ENCODE measurements at regions of chr5 and their contacts with region 1.

Region 1: GRCh38 chr5:61919920-61920319 is 386.1 kb upstream of the KIF2A start:
- DNase-seq: peak; percentile 64
- H3K4me3 Mint-ChIP-seq: no peak overlapping the region
- H3K27ac Mint-ChIP-seq: no peak overlapping the region
- H3K4me1 Mint-ChIP-seq: peaks cover 22% of the 10 kb centered on the region
- H3K27me3 Mint-ChIP-seq: no peaks in the 10 kb centered on the region
- CTCF ChIP-seq: no peak

Region 2: DNA sequence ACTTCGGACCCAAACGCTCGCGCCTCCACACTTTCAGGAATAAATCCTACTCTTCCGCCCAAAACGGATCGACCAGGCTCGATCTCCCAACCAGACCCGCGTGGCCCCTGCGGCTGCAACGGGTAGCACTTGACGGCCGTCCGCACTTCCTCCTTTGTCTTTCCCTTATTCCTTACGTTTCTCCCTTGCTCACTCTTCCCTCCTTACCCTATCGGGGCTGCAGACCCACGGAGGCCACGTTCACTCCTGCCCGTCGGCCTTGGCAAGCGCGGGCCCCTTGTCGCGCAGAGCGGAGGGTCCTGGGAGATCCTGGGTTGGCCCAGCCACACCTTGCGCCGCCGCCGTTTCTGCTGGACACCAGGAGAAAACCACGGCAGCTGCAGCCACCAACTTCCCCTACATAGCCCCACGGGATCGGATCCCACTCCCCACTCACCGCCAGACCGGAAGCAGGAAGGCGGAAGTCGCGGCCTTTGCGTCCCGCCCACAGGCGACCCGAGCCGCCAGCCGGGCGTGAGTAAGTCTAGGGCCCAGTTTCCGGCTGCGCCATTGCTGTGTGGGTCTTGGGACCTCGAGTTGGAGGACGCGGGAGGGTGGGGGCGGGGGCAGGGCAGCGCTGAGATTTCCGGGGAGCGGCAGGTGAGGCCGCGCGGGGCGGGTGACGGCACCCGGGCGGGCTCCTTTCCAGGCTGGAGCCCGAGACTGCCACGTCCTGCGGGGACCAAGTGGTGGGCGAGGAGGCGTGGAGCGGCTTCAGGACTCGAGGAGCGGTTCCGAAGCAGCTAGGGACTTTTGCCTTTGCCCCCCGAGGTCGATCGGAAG is 757.7 kb before region 1 on chr5 and contains the start of gene SMIM15:
- CTCF ChIA-PET with region 1: no interaction called
- intact Hi-C with region 1: loop called (anchors 10 kb)
- DNase-seq: peak; percentile 91
- H3K4me3 Mint-ChIP-seq: peak within 1 kb of the TSS; percentile 90
- H3K27ac Mint-ChIP-seq: peak within 1 kb of the TSS; percentile 95
- H3K4me1 Mint-ChIP-seq: peaks cover 22% of the 10 kb centered on the region
- H3K27me3 Mint-ChIP-seq: no peaks in the 10 kb centered on the region
- CTCF ChIP-seq: no peak
- total RNA-seq, gene SMIM15: 89.6 and 100 TPM in 2 replicates

Measured in Calu3 (cell line).